Naive thymus-derived CD8-positive, alpha-beta T cell (primary cell): ENCODE measurements at regions of chr22 and their contacts with region 1.

Region 1: DNA sequence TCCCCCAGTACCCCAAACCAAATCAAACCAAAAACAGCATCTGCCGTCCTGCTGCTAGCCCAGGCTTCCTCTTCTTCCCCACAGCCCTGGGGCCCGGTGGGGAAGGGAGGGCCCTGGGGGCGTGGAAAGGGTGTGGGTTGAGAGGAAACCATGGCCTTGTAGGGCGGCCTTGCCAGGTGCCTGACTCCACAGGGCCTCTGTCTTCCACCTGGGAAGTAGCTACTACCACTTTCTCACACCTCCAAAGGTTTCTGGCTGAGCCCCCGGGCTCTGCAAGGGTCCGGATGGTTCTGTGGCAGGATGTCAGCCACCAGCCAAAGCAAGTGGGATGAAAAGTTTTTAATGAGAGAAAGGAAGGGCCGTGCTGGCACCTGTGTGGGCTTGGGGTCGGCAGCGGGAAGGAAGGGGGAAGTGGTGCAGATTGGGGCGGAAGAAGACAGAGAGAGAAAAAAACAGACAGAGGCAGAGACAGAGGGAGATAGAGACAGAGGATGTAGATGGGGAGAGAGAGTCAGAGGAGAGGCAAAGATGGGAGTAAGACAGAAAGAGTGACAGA is 10.5 kb downstream of the TPST2 start:
- DNase-seq: peak; percentile 38 to 75 (median 56)
- ATAC-seq: peak; percentile 94 to 96
- H3K4me3 Mint-ChIP-seq: peak overlapping the region; percentile 76 to 88 (median 81)
- H3K27ac Mint-ChIP-seq: peak overlapping the region; percentile 87 to 97 (median 92)
- H3K4me1 Mint-ChIP-seq: peaks cover 51 to 89% (median 81%) of the 10 kb centered on the region in 4 donors
- H3K27me3 Mint-ChIP-seq: no peaks in the 10 kb centered on the region

Region 2: GRCh38 chr22:26597026-26597425 is 17.6 kb after region 1 on chr22:
- POLR2A ChIA-PET with region 1: interaction called, 13 read pairs
- DNase-seq: peak in 8 of 10 donors; percentile 56 to 88 (median 82)
- ATAC-seq: peak; percentile 87 to 91
- H3K4me3 Mint-ChIP-seq: peak overlapping the region; percentile 11 to 82 (median 66)
- H3K27ac Mint-ChIP-seq: peak overlapping the region; percentile 73 to 97 (median 94)
- H3K4me1 Mint-ChIP-seq: peaks cover 43 to 85% (median 68%) of the 10 kb centered on the region in 4 donors
- H3K27me3 Mint-ChIP-seq: no peaks in the 10 kb centered on the region